Left colon (tissue), 2 donors: ENCODE measurements at regions of chr19 and their contacts with region 1.

Region 1: GRCh38 chr19:1605236-1606137 is at the start of gene UQCR11:
- DNase-seq: peak; percentile 95 to 96
- ATAC-seq: peak; percentile 87
- total RNA-seq, gene UQCR11: 337 to 359 TPM

Region 2: DNA sequence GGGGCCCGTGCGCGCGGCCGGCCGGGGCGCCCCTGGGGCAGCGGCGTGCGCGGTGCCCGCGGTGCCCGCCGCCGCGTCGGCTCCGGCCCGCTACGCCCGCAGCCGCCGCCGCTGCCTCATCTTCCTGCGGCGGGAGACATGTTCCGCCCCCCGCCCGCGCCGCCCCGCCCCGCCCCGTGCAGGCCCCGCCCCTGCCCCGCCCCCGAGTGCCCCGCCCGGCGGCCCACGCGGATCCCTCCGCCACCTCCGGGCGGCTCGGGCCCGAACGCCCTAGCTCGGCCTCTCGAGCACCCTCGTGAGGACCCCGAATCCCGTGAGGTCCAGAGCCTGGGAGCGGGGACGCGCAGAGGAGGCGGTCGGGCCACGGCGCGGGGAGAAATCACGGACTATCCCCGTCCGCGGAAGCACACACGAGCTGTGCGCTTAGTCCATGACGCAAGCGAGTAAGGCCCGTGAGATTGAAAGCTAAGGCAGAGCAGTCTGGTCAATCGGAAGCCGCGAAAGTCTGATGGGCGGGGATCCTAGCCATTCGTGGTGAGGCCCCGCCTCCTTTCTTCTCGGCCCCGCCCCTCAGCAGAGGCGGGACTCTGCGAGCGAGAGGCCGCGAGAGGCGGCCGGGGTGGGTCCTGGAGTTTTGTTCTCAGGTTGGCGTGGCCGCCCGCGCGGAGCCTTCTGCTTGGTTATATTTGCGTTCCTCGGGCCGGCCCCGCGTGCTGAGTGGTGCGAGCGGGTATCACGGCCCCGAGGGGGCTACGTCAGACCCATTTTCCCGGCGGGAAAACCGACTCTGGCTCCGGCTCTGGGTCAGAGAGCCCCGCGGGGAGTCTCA is 47.2 kb after region 1 on chr19 and contains the start of gene TCF3:
- intact Hi-C with region 1: loop called in 1 of 2 experiments (anchors 5 kb)
- DNase-seq: peak; percentile 97 to 99
- ATAC-seq: peak; percentile 94
- total RNA-seq, gene TCF3: 64.1 to 64.7 TPM